PC-3 (cell line): ENCODE measurements at regions of chr2 and their contacts with region 1.

Region 1: GRCh38 chr2:157182834-157183396 is 74.6 kb upstream of the GALNT5 start:
- DNase-seq: peak; percentile 95
- ATAC-seq: peak; percentile 95
- H3K4me3 ChIP-seq: no peak overlapping the region; the same call in 1 of the 2 replicates
- H3K27ac ChIP-seq: peak overlapping the region; percentile 82
- H3K4me1 ChIP-seq: peaks cover 13% of the 10 kb centered on the region
- H3K27me3 ChIP-seq: no peaks in the 10 kb centered on the region
- CTCF ChIP-seq: no peak

Region 2: GRCh38 chr2:156908825-156909224 is 274.1 kb before region 1 on chr2:
- CTCF ChIA-PET with region 1: no interaction called
- POLR2A ChIA-PET with region 1: no interaction called
- intact Hi-C with region 1: loop called (anchors 5 kb)
- DNase-seq: peak; percentile 89
- ATAC-seq: peak; percentile 90
- H3K4me3 ChIP-seq: no peak overlapping the region
- H3K27ac ChIP-seq: peak overlapping the region; percentile 70
- H3K4me1 ChIP-seq: peaks cover 28% of the 10 kb centered on the region
- H3K27me3 ChIP-seq: no peaks in the 10 kb centered on the region
- CTCF ChIP-seq: no peak

Region 3: DNA sequence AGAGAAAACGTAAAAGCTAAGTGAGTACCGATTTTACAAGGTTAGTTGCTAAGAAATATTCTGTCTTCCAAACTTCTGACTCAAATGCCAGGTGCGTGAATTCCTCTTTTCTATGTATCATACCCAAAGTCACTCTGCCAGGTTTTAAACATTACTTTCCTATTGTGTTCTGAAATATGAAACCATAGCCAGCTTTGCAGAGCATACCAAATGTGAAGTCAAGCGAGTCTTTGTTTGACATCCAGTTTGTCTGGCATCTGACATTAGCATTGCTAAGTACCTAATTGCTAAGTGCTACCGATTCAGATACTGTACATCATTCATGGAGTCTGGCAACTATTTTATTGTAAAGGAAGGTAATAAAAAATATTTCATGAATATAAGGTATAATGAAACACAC is 247.3 kb before region 1 on chr2:
- CTCF ChIA-PET with region 1: no interaction called
- POLR2A ChIA-PET with region 1: no interaction called
- intact Hi-C with region 1: loop called (anchors 1 kb)
- DNase-seq: peak; percentile 98
- ATAC-seq: peak; percentile 95
- H3K4me3 ChIP-seq: no peak overlapping the region; the same call in 1 of the 2 replicates
- H3K27ac ChIP-seq: peak overlapping the region; percentile 60
- H3K4me1 ChIP-seq: peaks cover 37% of the 10 kb centered on the region
- H3K27me3 ChIP-seq: no peaks in the 10 kb centered on the region
- CTCF ChIP-seq: no peak